Ascending aorta (tissue), 2 donors: ENCODE measurements at regions of chr13 and their contacts with region 1.

Region 1: DNA sequence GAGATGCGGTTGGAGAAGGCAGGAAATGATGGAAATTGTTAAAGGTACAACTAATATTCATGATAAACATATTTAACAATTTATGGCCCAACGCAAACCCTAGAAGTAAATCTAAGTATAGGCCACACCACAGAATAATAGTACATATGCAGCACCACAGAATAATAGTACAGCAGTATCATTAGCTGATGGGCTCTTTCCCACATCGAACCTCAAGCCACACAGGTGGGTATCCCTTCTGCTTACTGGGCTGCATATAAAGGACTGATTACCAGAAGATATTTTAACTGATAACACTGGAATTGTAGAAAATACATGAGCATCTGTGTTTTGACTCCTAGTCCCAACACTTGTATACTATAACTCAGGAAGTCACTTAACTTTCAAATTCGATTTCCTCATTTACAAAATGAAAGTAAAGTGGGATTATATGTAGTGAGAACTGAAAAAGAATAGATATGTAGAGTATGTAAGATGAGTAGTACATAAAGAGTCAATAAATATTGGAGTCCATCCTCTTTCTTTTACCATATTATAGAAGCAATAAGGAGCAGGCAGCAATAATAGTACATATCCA is 91.5 kb downstream of the TSC22D1 start:
- DNase-seq: no peak
- H3K4me3 ChIP-seq: peak overlapping the region in 1 of 2 donors; percentile 27
- H3K27ac ChIP-seq: no peak overlapping the region
- H3K4me1 ChIP-seq: peaks cover 0 to 15% of the 10 kb centered on the region in 2 donors
- H3K27me3 ChIP-seq: no peaks in the 10 kb centered on the region
- CTCF ChIP-seq: no peak

Region 2: DNA sequence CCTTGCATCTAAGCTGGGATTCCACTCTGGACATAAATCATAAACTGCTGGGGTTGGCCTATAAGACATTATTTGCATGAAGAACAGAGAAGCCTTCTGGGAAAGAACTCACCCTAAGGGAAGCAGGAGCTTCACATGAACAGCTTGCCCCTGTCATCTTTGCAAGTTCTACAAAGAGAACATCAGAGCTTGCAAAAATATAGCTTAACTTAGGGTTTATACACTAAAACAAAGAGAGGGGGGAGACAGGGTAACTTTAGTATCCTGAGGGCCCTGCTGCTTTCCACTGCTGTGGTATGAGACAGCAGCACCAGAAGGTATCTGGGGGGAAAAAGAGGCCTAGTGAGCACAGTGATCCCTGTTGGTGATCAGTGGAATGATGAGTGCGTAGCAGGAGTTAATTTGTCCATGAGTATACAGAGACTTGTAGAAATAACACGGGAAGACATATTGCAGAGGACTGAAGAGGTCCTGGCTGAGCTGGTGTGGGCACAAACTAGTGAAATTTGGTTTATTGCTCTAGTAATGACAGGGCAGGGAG is 207.6 kb after region 1 on chr13:
- intact Hi-C with region 1: no loop called
- DNase-seq: no peak
- H3K4me3 ChIP-seq: no peak overlapping the region
- H3K27ac ChIP-seq: no peak overlapping the region
- H3K4me1 ChIP-seq: peaks cover 0 to 15% of the 10 kb centered on the region in 2 donors
- H3K27me3 ChIP-seq: no peaks in the 10 kb centered on the region
- CTCF ChIP-seq: no peak

Region 3: DNA sequence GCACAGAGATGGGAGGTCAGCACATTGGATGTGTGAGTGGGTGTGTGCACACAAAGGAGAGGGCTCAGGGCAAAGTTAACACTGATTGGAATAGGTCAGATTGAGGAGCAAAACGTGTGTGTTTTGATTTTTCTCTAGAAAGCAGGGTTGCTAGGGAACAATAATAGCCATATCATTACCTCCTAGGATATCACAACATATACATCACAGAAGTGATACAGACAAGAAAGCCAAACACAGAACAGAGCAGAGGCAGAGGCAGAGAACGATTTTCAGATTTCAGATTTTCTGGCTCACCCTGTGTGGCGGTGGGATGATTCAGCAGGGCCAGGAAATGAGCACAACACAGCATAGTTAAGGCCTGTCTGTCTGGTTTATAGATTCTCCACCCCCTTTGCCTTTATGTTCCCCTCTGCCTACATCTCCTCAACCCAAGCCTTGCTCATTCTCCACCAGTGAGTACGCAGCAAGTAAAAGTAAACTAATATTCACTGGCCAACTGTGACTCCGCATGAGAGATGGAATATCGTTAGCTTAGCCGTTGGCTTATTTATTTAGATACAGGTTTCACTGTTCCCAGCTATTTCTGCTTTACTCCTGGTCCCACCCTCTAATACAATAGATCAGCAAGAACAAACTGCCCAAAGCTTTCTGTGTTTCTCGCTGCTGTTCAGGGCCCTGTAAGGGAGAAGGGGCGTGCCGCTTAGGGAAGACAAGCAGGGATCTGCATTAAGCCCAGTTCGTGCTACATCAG is 274.2 kb after region 1 on chr13:
- intact Hi-C with region 1: loop called (anchors 10 kb)
- DNase-seq: no peak
- H3K4me3 ChIP-seq: no peak overlapping the region
- H3K27ac ChIP-seq: no peak overlapping the region
- H3K4me1 ChIP-seq: peaks cover 0 to 3% of the 10 kb centered on the region in 2 donors
- H3K27me3 ChIP-seq: no peaks in the 10 kb centered on the region
- CTCF ChIP-seq: no peak

Region 4: GRCh38 chr13:44879463-44880058 is 394.9 kb after region 1 on chr13:
- intact Hi-C with region 1: loop called (anchors 1 kb)
- DNase-seq: peak in 1 of 2 donors; percentile 51
- H3K4me3 ChIP-seq: no peak overlapping the region
- H3K27ac ChIP-seq: no peak overlapping the region
- H3K4me1 ChIP-seq: no peaks in the 10 kb centered on the region
- H3K27me3 ChIP-seq: no peaks in the 10 kb centered on the region
- CTCF ChIP-seq: peak in 2 of 3 experiments; percentile 27 to 52